ENCODE measurements at regions of chr14 and their contacts with region 1.

Region 1: DNA sequence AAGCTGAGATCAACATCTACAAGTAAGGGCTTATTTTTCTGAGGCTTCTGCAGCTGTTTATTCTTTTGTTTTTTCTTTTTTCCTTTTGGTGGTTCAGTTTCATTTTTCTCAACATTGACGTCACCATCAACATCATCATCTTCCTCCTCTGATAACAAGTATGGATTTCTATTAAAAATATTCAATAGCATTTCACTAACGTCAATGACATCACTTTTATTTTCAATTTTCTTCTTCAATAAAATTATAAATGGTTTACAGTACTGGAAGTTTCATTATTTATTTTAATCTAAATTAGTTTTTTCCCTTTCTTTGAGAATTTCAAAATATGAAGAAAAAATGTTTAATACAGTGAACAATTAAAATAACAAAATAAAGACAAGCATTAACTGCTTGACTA is 23.9 kb downstream of the NEMF start:
- DNase-seq: no peak
- ATAC-seq: no peak

Region 2: GRCh38 chr14:49792618-49793017 is 36.0 kb before region 1 on chr14:
- intact Hi-C with region 1: loop called (anchors 5 kb)
- DNase-seq: no peak
- ATAC-seq: no peak

Region 3: GRCh38 chr14:49908432-49908781 is 79.8 kb after region 1 on chr14:
- intact Hi-C with region 1: no loop called
- DNase-seq: no peak
- ATAC-seq: no peak

Measured in Right ventricle myocardium superior (tissue), 1 donor.